Right ventricle myocardium inferior (tissue), 1 donor: ENCODE measurements at regions of chrX and their contacts with region 1.

Region 1: DNA sequence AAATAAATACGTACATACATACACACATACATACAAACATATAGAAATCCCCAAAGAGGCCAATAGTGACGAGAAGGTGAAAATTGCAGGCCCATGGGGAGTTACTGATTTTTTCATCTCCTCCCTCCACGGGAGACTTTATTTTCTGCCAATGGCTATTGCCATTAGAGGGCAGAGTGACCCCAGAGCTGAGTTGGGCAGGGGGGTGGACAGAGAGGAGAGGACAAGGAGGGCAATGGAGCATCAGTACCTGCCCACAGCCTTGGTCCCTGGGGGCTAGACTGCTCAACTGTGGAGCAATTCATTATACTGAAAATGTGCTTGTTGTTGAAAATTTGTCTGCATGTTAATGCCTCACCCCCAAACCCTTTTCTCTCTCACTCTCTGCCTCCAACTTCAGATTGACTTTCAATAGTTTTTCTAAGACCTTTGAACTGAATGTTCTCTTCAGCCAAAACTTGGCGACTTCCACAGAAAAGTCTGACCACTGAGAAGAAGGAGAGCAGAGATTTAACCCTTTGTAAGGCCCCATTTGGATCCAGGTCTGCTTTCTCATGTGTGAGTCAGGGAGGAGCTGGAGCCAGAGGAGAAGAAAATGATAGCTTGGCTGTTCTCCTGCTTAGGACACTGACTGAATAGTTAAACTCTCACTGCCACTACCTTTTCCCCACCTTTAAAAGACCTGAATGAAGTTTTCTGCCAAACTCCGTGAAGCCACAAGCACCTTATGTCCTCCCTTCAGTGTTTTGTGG is 180.7 kb downstream of the AR start:
- DNase-seq: no peak
- ATAC-seq: no peak

Region 2: GRCh38 chrX:67619253-67619652 is 105.3 kb before region 1 on chrX:
- intact Hi-C with region 1: no loop called
- DNase-seq: no peak
- ATAC-seq: no peak

Region 3: GRCh38 chrX:67780694-67781109 is 56.2 kb after region 1 on chrX:
- intact Hi-C with region 1: loop called (anchors 5 kb)
- DNase-seq: peak; percentile 75
- ATAC-seq: peak; percentile 85

Region 4: DNA sequence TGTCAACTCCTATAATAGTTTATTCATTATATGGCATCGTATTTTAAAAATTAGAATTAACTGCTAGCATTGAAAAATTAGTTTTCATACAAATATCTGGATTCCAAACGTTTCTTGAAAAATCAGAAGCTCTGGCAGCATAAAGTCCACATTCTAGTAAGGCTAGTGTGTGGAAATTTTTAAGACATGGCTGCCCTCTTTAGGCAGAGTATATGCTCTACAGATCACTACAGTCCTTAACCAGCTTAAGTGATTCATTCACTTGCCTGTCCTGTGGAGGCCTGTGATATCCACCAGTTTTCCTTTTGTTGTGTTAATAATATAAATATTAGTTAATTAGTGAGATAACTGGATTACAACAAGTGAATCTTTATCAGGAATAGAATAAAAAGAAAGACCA is 421.5 kb after region 1 on chrX:
- intact Hi-C with region 1: loop called (anchors 10 kb)
- DNase-seq: no peak
- ATAC-seq: no peak

Region 5: DNA sequence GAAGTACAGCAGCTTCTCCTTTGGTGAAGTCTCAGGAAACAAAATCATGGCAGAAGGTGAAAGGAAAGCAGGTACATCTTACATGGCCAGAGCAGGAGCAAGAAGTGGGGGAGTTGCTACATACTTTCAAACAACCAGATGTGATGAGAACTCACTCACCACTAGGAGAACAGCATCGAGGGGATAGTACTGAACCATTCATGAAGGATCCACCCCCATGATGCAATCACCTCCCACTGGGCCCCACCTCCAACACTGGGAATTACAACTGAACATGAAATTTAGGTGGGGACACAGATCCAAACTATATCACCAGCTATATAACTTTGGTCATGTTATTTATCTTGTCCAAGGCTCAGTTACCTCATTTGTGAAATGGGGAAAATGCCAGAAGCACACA is 549.4 kb after region 1 on chrX:
- intact Hi-C with region 1: no loop called
- DNase-seq: no peak
- ATAC-seq: no peak